ENCODE measurements at regions of chr9 and their contacts with region 1.

Region 1: GRCh38 chr9:112361601-112362000 is 18.3 kb upstream of the HSDL2 start:
- DNase-seq: peak; percentile 48
- H3K4me3 Mint-ChIP-seq: no peak overlapping the region
- H3K27ac Mint-ChIP-seq: no peak overlapping the region
- H3K4me1 Mint-ChIP-seq: peaks cover 5% of the 10 kb centered on the region
- H3K27me3 Mint-ChIP-seq: no peaks in the 10 kb centered on the region
- CTCF ChIP-seq: peak; percentile 34

Region 2: GRCh38 chr9:111759762-111760639 is 601.6 kb before region 1 on chr9:
- CTCF ChIA-PET with region 1: no interaction called
- POLR2A ChIA-PET with region 1: interaction called, 5 read pairs
- intact Hi-C with region 1: loop called (anchors 10 kb)
- DNase-seq: peak; percentile 85
- H3K4me3 Mint-ChIP-seq: no peak overlapping the region
- H3K27ac Mint-ChIP-seq: peak overlapping the region; percentile 87
- H3K4me1 Mint-ChIP-seq: peaks cover 8% of the 10 kb centered on the region
- H3K27me3 Mint-ChIP-seq: no peaks in the 10 kb centered on the region
- CTCF ChIP-seq: peak; percentile 68

Region 3: DNA sequence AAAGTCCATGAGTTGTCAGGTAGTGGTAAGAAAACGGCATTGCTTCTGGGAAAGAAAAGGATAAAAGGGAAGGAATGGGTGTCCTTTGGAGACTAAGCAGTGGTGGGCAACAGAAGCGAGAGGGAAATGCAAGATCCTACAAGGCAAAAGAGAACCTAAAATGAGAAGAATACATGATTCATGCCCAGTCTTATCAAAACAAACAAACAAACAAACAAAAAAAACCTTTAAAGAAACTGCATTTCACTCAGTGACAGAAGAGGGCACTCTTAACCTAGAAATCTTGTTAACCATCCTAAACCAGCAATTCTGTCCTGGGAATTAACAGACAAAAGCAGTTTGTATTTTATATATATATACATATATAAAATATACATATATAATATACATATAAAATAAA is 275.0 kb before region 1 on chr9:
- CTCF ChIA-PET with region 1: interaction called, 26 read pairs
- POLR2A ChIA-PET with region 1: interaction called, 5 read pairs
- intact Hi-C with region 1: loop called (anchors 2 kb)
- DNase-seq: peak; percentile 39
- H3K4me3 Mint-ChIP-seq: no peak overlapping the region
- H3K27ac Mint-ChIP-seq: peak overlapping the region; percentile 65
- H3K4me1 Mint-ChIP-seq: peaks cover 6% of the 10 kb centered on the region
- H3K27me3 Mint-ChIP-seq: no peaks in the 10 kb centered on the region
- CTCF ChIP-seq: peak; percentile 62

Region 4: GRCh38 chr9:112097712-112098688 is 263.6 kb before region 1 on chr9:
- CTCF ChIA-PET with region 1: interaction called, 65 read pairs
- POLR2A ChIA-PET with region 1: interaction called, 5 read pairs
- intact Hi-C with region 1: loop called (anchors 1 kb)
- DNase-seq: peak; percentile 79
- H3K4me3 Mint-ChIP-seq: no peak overlapping the region
- H3K27ac Mint-ChIP-seq: no peak overlapping the region
- H3K4me1 Mint-ChIP-seq: no peaks in the 10 kb centered on the region
- H3K27me3 Mint-ChIP-seq: no peaks in the 10 kb centered on the region
- CTCF ChIP-seq: peak; percentile 75

Region 5: GRCh38 chr9:112119225-112120029 is 242.2 kb before region 1 on chr9:
- CTCF ChIA-PET with region 1: interaction called, 110 read pairs
- POLR2A ChIA-PET with region 1: interaction called, 33 read pairs
- intact Hi-C with region 1: no loop called
- DNase-seq: no peak
- H3K4me3 Mint-ChIP-seq: no peak overlapping the region
- H3K27ac Mint-ChIP-seq: no peak overlapping the region
- H3K4me1 Mint-ChIP-seq: no peaks in the 10 kb centered on the region
- H3K27me3 Mint-ChIP-seq: no peaks in the 10 kb centered on the region
- CTCF ChIP-seq: no peak

Region 6: DNA sequence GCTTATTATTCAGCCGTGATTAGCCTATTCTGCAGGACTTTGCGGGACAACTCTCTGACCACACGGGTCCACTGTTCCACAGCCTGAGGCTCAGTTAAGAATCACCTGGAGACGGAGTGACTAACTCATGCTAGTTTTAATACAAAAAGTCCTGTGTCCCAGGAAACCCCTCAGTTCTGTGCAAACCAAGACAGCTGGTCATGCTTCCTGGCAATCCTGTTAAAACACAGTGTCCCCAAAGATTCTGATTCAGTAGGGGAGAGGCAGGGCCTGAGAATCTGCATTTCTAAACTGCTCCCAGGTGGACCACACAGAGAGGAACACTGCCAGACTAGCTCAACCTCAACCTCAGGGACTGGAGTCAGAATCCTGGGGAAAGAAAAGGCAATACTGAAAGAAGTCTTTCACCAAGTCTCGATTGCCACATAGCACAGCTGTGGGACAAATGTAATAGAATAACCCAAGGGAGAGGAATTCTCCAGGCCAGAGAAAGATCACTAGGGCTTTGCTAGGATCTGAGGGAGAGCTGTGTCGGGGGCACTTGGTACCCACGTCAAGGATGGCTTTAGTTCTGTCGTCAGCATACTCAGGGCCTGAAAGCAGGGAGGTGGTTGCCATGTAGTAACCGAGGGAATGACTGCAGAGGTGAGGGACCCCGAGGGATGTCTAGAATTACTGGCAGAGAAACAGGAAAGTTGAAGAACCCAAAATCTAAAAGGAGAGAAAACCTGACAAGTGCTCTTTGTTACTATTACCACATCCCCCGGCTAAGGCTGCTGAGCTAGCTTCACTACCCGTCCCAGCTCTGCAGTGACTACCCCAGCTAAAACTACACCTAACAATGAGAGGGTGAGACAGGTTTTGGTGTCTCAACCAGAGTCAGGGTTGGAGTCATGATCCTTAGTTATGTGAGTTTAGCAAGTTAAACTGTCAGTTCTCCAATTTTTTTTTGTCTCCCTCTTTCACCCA is 195.1 kb before region 1 on chr9:
- CTCF ChIA-PET with region 1: interaction called, 5 read pairs
- POLR2A ChIA-PET with region 1: no interaction called
- intact Hi-C with region 1: loop called (anchors 1 kb)
- DNase-seq: peak; percentile 66
- H3K4me3 Mint-ChIP-seq: no peak overlapping the region
- H3K27ac Mint-ChIP-seq: peak overlapping the region; percentile 55
- H3K4me1 Mint-ChIP-seq: peaks cover 16% of the 10 kb centered on the region
- H3K27me3 Mint-ChIP-seq: no peaks in the 10 kb centered on the region
- CTCF ChIP-seq: peak; percentile 19

Region 7: GRCh38 chr9:112348257-112349007 is 13.2 kb before region 1 on chr9:
- CTCF ChIA-PET with region 1: interaction called, 13 read pairs
- POLR2A ChIA-PET with region 1: interaction called, 4 read pairs
- intact Hi-C with region 1: no loop called
- DNase-seq: peak; percentile 47
- H3K4me3 Mint-ChIP-seq: peak overlapping the region; percentile 65
- H3K27ac Mint-ChIP-seq: peak overlapping the region; percentile 77
- H3K4me1 Mint-ChIP-seq: peaks cover 8% of the 10 kb centered on the region
- H3K27me3 Mint-ChIP-seq: no peaks in the 10 kb centered on the region
- CTCF ChIP-seq: no peak

Region 8: GRCh38 chr9:112433499-112434392 is 72.1 kb after region 1 on chr9:
- CTCF ChIA-PET with region 1: no interaction called
- POLR2A ChIA-PET with region 1: no interaction called
- intact Hi-C with region 1: no loop called
- DNase-seq: no peak
- H3K4me3 Mint-ChIP-seq: no peak overlapping the region
- H3K27ac Mint-ChIP-seq: no peak overlapping the region
- H3K4me1 Mint-ChIP-seq: no peaks in the 10 kb centered on the region
- H3K27me3 Mint-ChIP-seq: no peaks in the 10 kb centered on the region
- CTCF ChIP-seq: no peak

Measured in MCF 10A (cell line).